Heart right ventricle (tissue), 16 donors: ENCODE measurements at regions of chr7 and their contacts with region 1.

Region 1: GRCh38 chr7:80659120-80660055 is 20.9 kb downstream of the CD36 start:
- DNase-seq: no peak
- ATAC-seq: peak in 5 of 8 donors; percentile 30 to 54 (median 40)
- H3K4me3 ChIP-seq: no peak overlapping the region
- H3K27ac ChIP-seq: peak overlapping the region in 9 of 10 donors; percentile 22 to 79 (median 51)
- H3K4me1 ChIP-seq: peaks cover 5 to 98% (median 50%) of the 10 kb centered on the region in 9 donors
- H3K27me3 ChIP-seq: no peaks in the 10 kb centered on the region
- CTCF ChIP-seq: peak; percentile 32 to 87 (median 68)

Region 2: GRCh38 chr7:80420876-80421275 is 238.5 kb before region 1 on chr7:
- intact Hi-C with region 1: loop called in 4 of 10 experiments (anchors 5 kb)
- DNase-seq: no peak
- ATAC-seq: no peak
- H3K4me3 ChIP-seq: no peak overlapping the region
- H3K27ac ChIP-seq: no peak overlapping the region
- H3K4me1 ChIP-seq: no peaks in the 10 kb centered on the region
- H3K27me3 ChIP-seq: no peaks in the 10 kb centered on the region
- CTCF ChIP-seq: no peak

Region 3: DNA sequence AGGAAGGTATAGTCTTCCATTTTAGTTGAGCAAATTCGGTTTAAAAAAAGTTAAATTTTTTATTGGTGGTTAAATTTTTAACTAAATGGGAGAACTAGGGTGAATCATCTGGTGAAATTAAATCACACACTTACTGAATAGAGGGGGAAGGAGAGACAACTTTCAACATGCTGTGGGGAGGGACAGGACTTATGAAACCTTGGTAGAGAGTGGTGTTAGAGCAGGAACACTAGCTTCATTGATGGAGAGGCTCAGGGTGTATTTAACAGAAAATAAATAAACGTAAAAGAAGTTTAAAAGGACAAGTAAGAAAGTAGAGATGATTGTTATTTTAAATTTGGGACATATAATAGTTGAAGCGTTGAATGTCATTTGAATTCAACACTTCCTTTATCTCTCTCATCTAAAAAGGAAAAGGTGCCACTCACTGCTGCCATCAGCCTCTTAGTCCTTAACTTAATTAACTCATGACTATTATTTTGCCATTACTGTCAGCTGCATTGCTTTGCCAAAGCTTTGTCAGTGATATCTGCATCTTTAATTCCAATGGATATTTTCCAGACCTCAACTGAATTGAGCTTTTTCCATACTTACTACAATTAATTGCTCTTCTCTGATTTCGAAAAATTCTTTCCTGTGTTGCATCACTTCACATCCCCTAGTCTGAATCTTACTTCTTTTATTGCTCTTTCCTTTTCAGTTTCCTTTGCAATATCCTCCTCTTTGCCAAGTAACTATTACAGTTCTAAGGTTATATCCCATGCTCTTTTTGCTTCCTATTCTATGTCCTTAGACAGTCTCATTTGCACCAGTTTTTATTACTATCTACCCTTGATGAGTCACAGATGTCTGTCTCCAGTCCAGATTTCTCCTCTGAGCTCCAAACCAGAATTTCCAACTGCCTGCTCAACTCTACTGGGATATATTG is 219.2 kb before region 1 on chr7:
- intact Hi-C with region 1: loop called in 2 of 10 experiments (anchors 5 to 10 kb)
- DNase-seq: no peak
- ATAC-seq: peak in 7 of 8 donors; percentile 56 to 79 (median 71)
- H3K4me3 ChIP-seq: no peak overlapping the region
- H3K27ac ChIP-seq: peak overlapping the region in 3 of 10 donors; percentile 22 to 64 (median 46)
- H3K4me1 ChIP-seq: peaks cover 0 to 47% (median 0%) of the 10 kb centered on the region in 9 donors
- H3K27me3 ChIP-seq: no peaks in the 10 kb centered on the region
- CTCF ChIP-seq: no peak

Region 4: GRCh38 chr7:80517282-80517747 is 142.1 kb before region 1 on chr7:
- intact Hi-C with region 1: loop called in 4 of 10 experiments (anchors 5 to 10 kb)
- DNase-seq: no peak
- ATAC-seq: peak in 6 of 8 donors; percentile 50 to 81 (median 73)
- H3K4me3 ChIP-seq: no peak overlapping the region
- H3K27ac ChIP-seq: peak overlapping the region in 7 of 10 donors; percentile 5 to 64 (median 47)
- H3K4me1 ChIP-seq: peaks cover 0 to 20% (median 12%) of the 10 kb centered on the region in 9 donors
- H3K27me3 ChIP-seq: no peaks in the 10 kb centered on the region
- CTCF ChIP-seq: peak in 5 of 9 donors; percentile 13 to 64 (median 56)

Region 5: GRCh38 chr7:80604436-80604835 is 55.0 kb before region 1 on chr7:
- intact Hi-C with region 1: loop called in 1 of 10 experiments (anchors 10 kb)
- DNase-seq: no peak
- ATAC-seq: peak; percentile 75 to 94 (median 90)
- H3K4me3 ChIP-seq: peak overlapping the region in 7 of 10 donors; percentile 27 to 53 (median 39)
- H3K27ac ChIP-seq: peak overlapping the region; percentile 51 to 87 (median 74)
- H3K4me1 ChIP-seq: peaks cover 2 to 86% (median 38%) of the 10 kb centered on the region in 9 donors
- H3K27me3 ChIP-seq: no peaks in the 10 kb centered on the region
- CTCF ChIP-seq: no peak